ENCODE measurements at regions of chr5 and their contacts with region 1.

Region 1: DNA sequence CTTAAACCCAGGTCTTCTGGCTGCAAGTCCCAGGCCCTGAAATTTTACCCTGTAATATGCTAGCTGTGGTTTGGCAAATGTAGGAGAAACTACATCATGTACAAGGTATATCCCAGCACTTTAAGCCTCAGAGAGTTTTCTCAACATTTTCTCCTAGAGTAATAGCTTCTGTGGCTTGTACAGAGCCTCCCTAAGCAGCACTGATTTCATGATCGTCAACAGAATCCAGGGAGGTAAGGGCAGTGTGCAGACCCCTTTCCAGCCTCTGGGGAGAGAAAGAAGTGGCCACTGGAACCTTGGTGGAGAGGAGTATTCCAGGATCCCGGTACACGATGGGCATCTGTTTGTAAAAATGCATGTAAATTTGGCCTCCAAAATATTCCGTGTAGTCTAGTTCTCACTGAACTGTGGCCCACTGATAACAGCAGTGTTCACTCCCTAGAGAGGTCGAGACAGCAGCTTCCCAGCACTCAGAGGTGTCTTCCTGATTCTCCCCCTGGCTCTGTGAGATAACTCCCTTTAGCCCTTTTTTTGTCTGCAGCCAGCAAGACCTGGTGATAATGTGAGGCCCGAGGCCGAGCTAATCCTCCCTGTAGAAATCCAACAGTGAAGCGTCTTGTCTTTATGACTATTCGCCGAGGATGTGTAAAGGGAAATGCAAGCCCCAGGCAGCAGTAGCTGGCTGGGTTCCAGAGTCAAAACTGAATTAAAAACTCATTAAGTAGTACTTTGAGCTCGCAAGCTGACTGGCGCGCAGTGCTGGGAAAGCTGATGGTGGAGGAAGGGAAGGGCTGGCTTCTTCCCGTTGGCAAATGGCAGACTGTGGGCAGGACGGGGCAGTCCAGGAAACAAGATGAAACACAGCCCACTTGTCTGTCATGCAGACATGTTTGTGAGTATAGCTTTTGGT is 59.0 kb downstream of the MAP1B start:
- DNase-seq: peak; percentile 89
- H3K4me3 ChIP-seq: no peak overlapping the region
- H3K27ac ChIP-seq: peak overlapping the region; percentile 22
- H3K4me1 ChIP-seq: peaks cover 21% of the 10 kb centered on the region
- H3K27me3 ChIP-seq: no peaks in the 10 kb centered on the region
- CTCF ChIP-seq: no peak
- POLR2A ChIP-seq: no peak

Region 2: GRCh38 chr5:72108202-72109061 is 57.9 kb before region 1 on chr5:
- CTCF ChIA-PET with region 1: no interaction called
- POLR2A ChIA-PET with region 1: no interaction called
- dilution Hi-C with region 1: no loop called
- intact Hi-C with region 1: loop called (anchors 5 kb)
- DNase-seq: peak; percentile 81
- H3K4me3 ChIP-seq: peak overlapping the region; percentile 91 to 98 (median 97)
- H3K27ac ChIP-seq: peak overlapping the region; percentile 48
- H3K4me1 ChIP-seq: peaks cover 39% of the 10 kb centered on the region
- H3K27me3 ChIP-seq: no peaks in the 10 kb centered on the region
- CTCF ChIP-seq: no peak
- POLR2A ChIP-seq: peak; percentile 53

Region 3: DNA sequence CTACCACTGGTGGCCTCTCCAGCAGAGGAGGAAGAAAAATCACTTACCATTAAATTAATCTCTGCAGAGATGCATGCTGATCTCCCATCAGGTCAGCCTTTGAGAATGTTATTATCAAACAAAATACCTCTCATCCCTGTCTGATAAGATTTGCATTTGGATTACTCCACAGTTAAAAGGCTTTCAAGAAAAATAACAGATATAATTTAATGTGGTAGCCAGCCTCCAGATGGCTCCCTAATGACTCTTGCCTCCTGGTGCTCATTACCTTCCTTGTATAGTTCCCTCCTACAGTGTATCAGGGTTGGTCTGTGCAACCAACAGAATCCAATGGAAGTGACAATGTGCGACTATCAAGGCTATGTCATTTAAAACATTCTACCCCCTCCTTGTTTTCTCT is 586.6 kb after region 1 on chr5:
- CTCF ChIA-PET with region 1: no interaction called
- POLR2A ChIA-PET with region 1: no interaction called
- dilution Hi-C with region 1: no loop called
- intact Hi-C with region 1: no loop called
- DNase-seq: no peak
- H3K4me3 ChIP-seq: no peak overlapping the region
- H3K27ac ChIP-seq: no peak overlapping the region
- H3K4me1 ChIP-seq: no peaks in the 10 kb centered on the region
- H3K27me3 ChIP-seq: no peaks in the 10 kb centered on the region
- CTCF ChIP-seq: no peak
- POLR2A ChIP-seq: no peak

Measured in endothelial cell of umbilical vein (primary cell).